ENCODE measurements at regions of chr14 and their contacts with region 1.

Region 1: DNA sequence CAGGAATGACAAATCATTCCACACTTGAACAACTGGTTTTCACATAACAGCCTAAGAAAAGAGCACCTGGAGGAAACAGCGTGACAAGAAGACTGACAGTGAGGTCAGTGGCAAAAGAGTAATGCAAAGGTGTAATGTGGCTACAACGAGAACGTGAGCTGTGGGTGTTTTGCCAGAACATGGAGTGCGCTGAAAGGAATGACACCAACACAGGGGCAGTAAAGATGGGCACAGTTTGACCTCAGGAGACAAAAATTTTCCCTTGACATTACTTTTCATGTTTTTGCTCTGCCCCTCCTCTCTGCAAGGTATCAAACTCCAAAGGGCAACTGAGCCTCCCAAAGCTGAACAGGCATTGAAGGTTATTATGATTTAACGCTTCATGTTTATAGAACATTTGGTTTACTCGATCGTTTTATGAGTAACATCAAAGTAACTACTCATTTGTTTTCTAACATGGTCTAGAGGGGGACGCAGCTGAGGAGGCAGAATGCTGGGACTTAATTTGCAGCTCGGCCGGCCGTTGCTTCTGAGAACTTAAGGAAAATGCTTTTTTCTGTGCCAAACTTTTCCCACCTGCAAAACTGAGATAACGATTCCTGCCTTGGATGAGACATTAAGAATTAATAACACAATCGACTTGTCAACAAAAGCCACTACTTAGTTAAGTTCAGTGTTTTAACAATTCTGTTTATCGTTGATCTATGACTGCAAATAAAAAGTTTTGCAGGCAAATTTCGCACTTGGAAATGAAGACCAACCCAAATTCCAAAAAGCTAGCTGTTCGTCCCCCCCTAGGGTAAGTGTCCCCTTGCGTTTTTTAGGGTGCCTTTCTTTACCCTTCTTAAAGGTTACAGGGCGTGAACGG is 954 bp downstream of the HAUS4 start:
- DNase-seq: peak in 2 of 4 experiments; percentile 23 to 57
- ATAC-seq: 0 out of 3 replicates have a peak, but pooled peaks have one; percentile 4
- H3K4me3 ChIP-seq: peak overlapping the region; percentile 75
- H3K27ac ChIP-seq: peak overlapping the region; percentile 92
- H3K4me1 ChIP-seq: peaks cover 18% of the 10 kb centered on the region in 2 experiments
- H3K27me3 ChIP-seq: no peaks in the 10 kb centered on the region
- CTCF ChIP-seq: no peak
- EP300 ChIP-seq: no peak
- POLR2A ChIP-seq: no peak
- RAD21 ChIP-seq: no peak

Region 2: DNA sequence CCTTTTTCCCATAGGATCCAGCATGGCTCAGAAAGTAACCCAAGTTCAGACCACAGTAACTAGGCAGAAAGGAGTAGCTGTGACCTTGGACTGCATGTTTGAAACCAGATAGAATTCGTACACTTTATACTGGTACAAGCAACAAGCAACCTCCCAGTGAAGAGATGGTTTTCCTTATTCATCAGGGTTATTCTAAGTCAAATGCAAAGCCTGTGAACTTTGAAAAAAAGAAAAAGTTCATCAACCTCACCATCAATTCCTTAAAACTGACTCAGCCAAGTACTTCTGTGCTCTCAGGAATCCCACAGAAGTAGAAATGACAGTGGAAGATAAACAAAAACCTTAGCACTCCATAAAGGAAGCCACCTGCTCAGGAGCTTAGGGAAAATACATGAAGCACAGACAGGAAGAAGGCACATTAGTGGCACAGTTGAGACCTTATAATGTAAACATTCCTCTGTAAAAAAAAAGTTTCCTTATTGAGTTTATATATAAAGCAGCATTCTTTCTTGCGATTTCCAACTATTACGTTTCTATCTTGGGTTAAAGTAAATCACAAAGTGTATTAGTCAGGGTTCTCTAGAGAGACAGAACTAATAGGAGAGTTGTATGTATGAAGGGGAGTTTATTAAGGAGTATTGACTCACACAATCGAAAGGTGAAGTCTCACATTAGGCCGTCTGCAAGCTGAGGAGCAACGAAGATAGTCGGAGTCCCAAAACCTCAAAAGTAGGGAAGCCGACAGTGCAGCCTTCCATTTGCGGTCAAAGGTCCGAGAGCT is 765.3 kb before region 1 on chr14:
- CTCF ChIA-PET with region 1: no interaction called
- POLR2A ChIA-PET with region 1: no interaction called
- in situ Hi-C with region 1: no loop called
- intact Hi-C with region 1: no loop called
- DNase-seq: no peak
- ATAC-seq: no peak
- H3K4me3 ChIP-seq: no peak overlapping the region
- H3K27ac ChIP-seq: no peak overlapping the region
- H3K4me1 ChIP-seq: no peaks in the 10 kb centered on the region
- H3K27me3 ChIP-seq: no peaks in the 10 kb centered on the region
- CTCF ChIP-seq: no peak
- EP300 ChIP-seq: no peak
- POLR2A ChIP-seq: no peak
- RAD21 ChIP-seq: no peak

Region 3: GRCh38 chr14:22766456-22767322 is 189.2 kb before region 1 on chr14 and contains the start of gene OXA1L:
- CTCF ChIA-PET with region 1: no interaction called
- POLR2A ChIA-PET with region 1: no interaction called
- in situ Hi-C with region 1: no loop called
- intact Hi-C with region 1: no loop called
- DNase-seq: peak; percentile 91 to 98 (median 94)
- ATAC-seq: peak; percentile 92
- H3K4me3 ChIP-seq: peak within 1 kb of the TSS; percentile 79
- H3K27ac ChIP-seq: peak within 1 kb of the TSS; percentile 97
- H3K4me1 ChIP-seq: peaks cover 7 to 10% of the 10 kb centered on the region in 2 experiments; a peak in 4 of 5 replicates
- H3K27me3 ChIP-seq: no peaks in the 10 kb centered on the region
- CTCF ChIP-seq: no peak
- EP300 ChIP-seq: no peak
- POLR2A ChIP-seq: peak; percentile 97
- RAD21 ChIP-seq: no peak
- polyA plus RNA-seq, gene OXA1L: 137 to 166 TPM

Region 4: DNA sequence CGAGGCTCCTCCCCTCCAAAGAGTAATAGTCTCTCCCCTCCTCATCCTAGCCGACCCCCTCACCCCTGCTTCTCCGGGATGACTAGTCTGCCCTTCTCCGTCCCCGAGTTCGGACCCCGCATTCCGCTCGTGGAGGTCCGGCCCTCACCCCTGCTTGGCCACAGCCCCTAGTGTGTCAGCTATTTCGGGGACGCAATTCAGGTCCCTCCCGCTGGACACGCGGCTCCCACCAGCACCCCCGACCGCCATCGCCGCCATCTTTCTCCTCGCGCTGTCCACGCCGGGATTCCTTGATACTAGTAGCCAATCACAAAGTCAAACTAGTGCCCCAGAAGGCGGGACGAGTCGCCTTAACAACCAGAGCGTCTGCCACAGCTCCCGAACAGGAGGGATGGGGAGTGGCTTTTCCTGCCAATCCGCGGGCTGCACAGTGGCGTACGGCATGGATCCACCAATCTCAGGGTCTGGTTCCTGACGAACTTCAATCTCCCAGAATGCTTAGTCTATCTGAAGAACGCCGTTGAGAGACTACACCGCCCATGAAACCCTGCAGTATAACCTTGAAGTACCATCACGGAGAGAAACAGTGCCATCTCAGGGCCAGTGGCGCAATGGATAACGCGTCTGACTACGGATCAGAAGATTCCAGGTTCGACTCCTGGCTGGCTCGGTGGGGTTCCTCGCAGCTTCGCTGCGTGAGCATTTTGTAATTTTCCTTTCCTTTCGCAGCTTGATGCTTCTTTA is 26.7 kb before region 1 on chr14 and contains the start of gene PRMT5:
- CTCF ChIA-PET with region 1: no interaction called
- POLR2A ChIA-PET with region 1: interaction called, 17 read pairs
- in situ Hi-C with region 1: no loop called
- intact Hi-C with region 1: loop called (anchors 2 kb)
- DNase-seq: peak; percentile 94 to 99 (median 96)
- ATAC-seq: peak; percentile 96
- H3K4me3 ChIP-seq: peak within 1 kb of the TSS; percentile 80
- H3K27ac ChIP-seq: peak within 1 kb of the TSS; percentile 88
- H3K4me1 ChIP-seq: peaks cover 5 to 14% of the 10 kb centered on the region in 2 experiments; a peak in 3 of 5 replicates
- H3K27me3 ChIP-seq: no peaks in the 10 kb centered on the region
- CTCF ChIP-seq: peak in 1 of 3 experiments; percentile 26; a peak in 2 of 6 replicates
- EP300 ChIP-seq: peak; percentile 77
- POLR2A ChIP-seq: peak; percentile 99
- RAD21 ChIP-seq: no peak
- polyA plus RNA-seq, gene PRMT5: 114 to 155 TPM

Region 5: DNA sequence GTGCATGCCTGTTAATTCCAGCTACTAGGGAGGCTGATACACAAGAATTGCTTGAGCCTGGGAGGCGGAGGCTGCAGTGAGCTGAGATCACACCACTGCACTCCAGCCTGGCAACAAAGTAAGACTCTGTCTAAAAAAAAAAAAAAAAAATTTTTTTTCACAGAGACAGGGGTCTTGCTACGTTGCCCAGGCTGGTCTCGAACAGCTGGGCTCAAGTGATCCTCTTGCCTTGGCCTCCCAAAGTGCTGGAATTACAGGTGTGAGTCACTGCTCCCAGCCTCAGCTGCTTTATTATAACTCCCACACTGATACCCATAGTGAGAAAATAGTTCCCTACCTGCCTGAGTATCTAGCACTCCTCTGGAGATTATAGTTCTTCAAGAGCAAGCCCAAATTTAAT is 10.3 kb before region 1 on chr14:
- CTCF ChIA-PET with region 1: no interaction called
- POLR2A ChIA-PET with region 1: interaction called, 18 read pairs
- in situ Hi-C with region 1: no loop called
- intact Hi-C with region 1: no loop called
- DNase-seq: no peak
- ATAC-seq: no peak
- H3K4me3 ChIP-seq: no peak overlapping the region
- H3K27ac ChIP-seq: no peak overlapping the region
- H3K4me1 ChIP-seq: no peaks in the 10 kb centered on the region
- H3K27me3 ChIP-seq: no peaks in the 10 kb centered on the region
- CTCF ChIP-seq: no peak
- EP300 ChIP-seq: no peak
- POLR2A ChIP-seq: no peak
- RAD21 ChIP-seq: no peak

Region 6: DNA sequence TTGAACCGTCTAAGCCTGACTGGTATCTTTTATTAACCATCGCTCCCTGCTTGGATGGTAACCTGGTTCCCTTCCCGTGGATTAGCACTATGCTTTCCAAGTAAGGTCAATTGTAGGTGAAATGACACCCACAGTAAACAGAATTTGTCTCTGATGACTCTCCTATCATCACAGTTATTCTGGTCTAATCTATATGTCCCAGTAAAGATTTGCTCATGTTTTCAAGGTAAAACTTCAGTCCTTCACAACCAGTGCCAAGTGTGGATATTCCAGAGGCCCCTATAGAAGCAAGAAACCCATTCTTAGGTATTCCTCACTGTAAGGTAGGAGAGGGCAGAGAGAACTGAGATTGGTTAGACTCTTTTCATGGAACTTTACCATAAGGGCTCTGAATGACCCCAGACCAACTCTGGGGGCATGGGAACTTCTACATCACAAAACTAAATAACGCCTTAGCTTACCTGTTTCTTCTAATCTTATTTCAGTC is 10.9 kb after region 1 on chr14:
- CTCF ChIA-PET with region 1: no interaction called
- POLR2A ChIA-PET with region 1: interaction called, 18 read pairs
- in situ Hi-C with region 1: no loop called
- intact Hi-C with region 1: no loop called
- DNase-seq: peak in 1 of 4 experiments; percentile 33
- ATAC-seq: no peak
- H3K4me3 ChIP-seq: no peak overlapping the region
- H3K27ac ChIP-seq: no peak overlapping the region
- H3K4me1 ChIP-seq: peaks cover 0 to 5% of the 10 kb centered on the region in 2 experiments; a peak in 2 of 5 replicates
- H3K27me3 ChIP-seq: no peaks in the 10 kb centered on the region
- CTCF ChIP-seq: no peak
- EP300 ChIP-seq: no peak
- POLR2A ChIP-seq: no peak
- RAD21 ChIP-seq: no peak

Region 7: GRCh38 chr14:22973217-22974032 is 17.5 kb after region 1 on chr14:
- CTCF ChIA-PET with region 1: no interaction called
- POLR2A ChIA-PET with region 1: interaction called, 18 read pairs
- in situ Hi-C with region 1: no loop called
- intact Hi-C with region 1: no loop called
- DNase-seq: peak; percentile 43 to 75 (median 54)
- ATAC-seq: peak; percentile 77
- H3K4me3 ChIP-seq: no peak overlapping the region
- H3K27ac ChIP-seq: no peak overlapping the region
- H3K4me1 ChIP-seq: peaks cover 19 to 21% of the 10 kb centered on the region in 2 experiments
- H3K27me3 ChIP-seq: no peaks in the 10 kb centered on the region
- CTCF ChIP-seq: peak; percentile 81 to 83 (median 81)
- EP300 ChIP-seq: no peak
- POLR2A ChIP-seq: no peak
- RAD21 ChIP-seq: peak; percentile 69 to 88